Sigmoid colon (tissue), 7 donors: ENCODE measurements at regions of chr3 and their contacts with region 1.

Region 1: DNA sequence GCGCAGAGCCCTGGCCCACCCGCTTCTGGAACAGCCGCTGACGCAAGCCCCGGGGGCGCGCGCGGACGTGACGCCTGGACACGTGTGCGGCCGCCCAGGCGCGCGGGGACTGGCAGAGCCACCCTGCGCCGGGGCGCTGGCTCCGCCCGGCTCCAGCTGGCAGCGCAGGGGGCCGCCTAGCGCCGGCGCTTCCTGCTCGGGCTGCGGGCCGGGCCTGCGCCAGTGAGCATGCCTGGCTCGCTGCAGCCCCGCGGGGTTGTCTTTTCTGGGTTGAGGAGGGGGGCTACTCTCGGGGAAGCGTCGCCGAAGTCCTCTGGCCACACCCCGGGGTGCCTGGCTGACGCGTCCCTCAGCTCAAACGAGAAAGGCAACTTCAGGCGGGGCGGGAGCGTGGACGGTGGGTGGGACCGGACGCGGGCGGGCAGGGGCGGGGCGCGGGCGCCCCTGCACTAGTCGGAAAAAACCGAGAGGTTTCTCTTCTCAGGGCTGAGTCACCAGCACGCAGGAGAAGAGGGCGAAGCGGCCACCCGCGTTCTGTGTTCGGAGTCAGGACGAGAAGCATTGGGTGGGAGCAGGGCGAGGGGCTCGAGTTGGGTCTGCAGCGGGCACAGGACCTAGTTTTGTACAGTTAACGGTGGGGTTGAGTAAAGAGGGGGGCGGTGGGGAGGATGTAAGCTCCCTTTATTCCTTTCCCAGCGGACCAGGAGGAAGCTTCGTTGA is at the start of gene SIAH2:
- DNase-seq: peak; percentile 96
- H3K4me3 ChIP-seq: peak within 1 kb of the TSS; percentile 70 to 90 (median 85)
- H3K27ac ChIP-seq: peak within 1 kb of the TSS; percentile 95 to 99 (median 98)
- H3K4me1 ChIP-seq: peaks cover 0 to 39% (median 30%) of the 10 kb centered on the region in 4 donors
- H3K27me3 ChIP-seq: no peaks in the 10 kb centered on the region
- CTCF ChIP-seq: no peak
- EP300 ChIP-seq: peak in 2 of 4 donors; percentile 35 to 71
- POLR2A ChIP-seq: peak in 1 of 2 donors; percentile 73
- total RNA-seq, gene SIAH2: 21.2 to 35.0 (median 24.5) TPM

Region 2: GRCh38 chr3:150546226-150547044 is 216.8 kb before region 1 on chr3 and contains the starts of genes EIF2A and SERP1:
- intact Hi-C with region 1: loop called (anchors 2 kb)
- DNase-seq: peak; percentile 99
- H3K4me3 ChIP-seq: peak within 1 kb of the TSS; percentile 67 to 84 (median 74)
- H3K27ac ChIP-seq: peak within 1 kb of the TSS; percentile 96 to 99 (median 98)
- H3K4me1 ChIP-seq: peaks cover 0 to 44% (median 32%) of the 10 kb centered on the region in 4 donors
- H3K27me3 ChIP-seq: no peaks in the 10 kb centered on the region
- CTCF ChIP-seq: no peak
- EP300 ChIP-seq: peak in 1 of 4 donors; percentile 88
- POLR2A ChIP-seq: peak; percentile 95 to 96
- total RNA-seq, gene EIF2A: 147 to 228 (median 160) TPM
- total RNA-seq, gene SERP1: 140 to 197 (median 185) TPM

Region 3: GRCh38 chr3:150697401-150698005 is 65.8 kb before region 1 on chr3:
- intact Hi-C with region 1: no loop called
- DNase-seq: no peak
- H3K4me3 ChIP-seq: no peak overlapping the region
- H3K27ac ChIP-seq: no peak overlapping the region
- H3K4me1 ChIP-seq: no peaks in the 10 kb centered on the region
- H3K27me3 ChIP-seq: no peaks in the 10 kb centered on the region
- CTCF ChIP-seq: no peak
- EP300 ChIP-seq: no peak
- POLR2A ChIP-seq: no peak

Region 4: GRCh38 chr3:151265866-151266265 is 502.6 kb after region 1 on chr3:
- intact Hi-C with region 1: loop called (anchors 5 kb)
- DNase-seq: no peak
- H3K4me3 ChIP-seq: no peak overlapping the region
- H3K27ac ChIP-seq: peak overlapping the region; percentile 60 to 80 (median 72)
- H3K4me1 ChIP-seq: peaks cover 0 to 78% (median 19%) of the 10 kb centered on the region in 4 donors
- H3K27me3 ChIP-seq: no peaks in the 10 kb centered on the region
- CTCF ChIP-seq: no peak
- EP300 ChIP-seq: no peak
- POLR2A ChIP-seq: no peak

Region 5: GRCh38 chr3:151460774-151461450 is 697.6 kb after region 1 on chr3 and contains the start of gene IGSF10:
- intact Hi-C with region 1: no loop called
- DNase-seq: no peak
- H3K4me3 ChIP-seq: peak within 1 kb of the TSS; percentile 34 to 61 (median 48)
- H3K27ac ChIP-seq: peak within 1 kb of the TSS in 1 of 4 donors; percentile 21
- H3K4me1 ChIP-seq: peaks cover 0 to 21% (median 9%) of the 10 kb centered on the region in 4 donors
- H3K27me3 ChIP-seq: peaks cover 0 to 9% (median 0%) of the 10 kb centered on the region in 3 donors
- CTCF ChIP-seq: no peak
- EP300 ChIP-seq: no peak
- POLR2A ChIP-seq: no peak
- total RNA-seq, gene IGSF10: 0.41 to 7.2 (median 1.7) TPM